AG04450 (cell line): ENCODE measurements at regions of chr1 and their contacts with region 1.

Region 1: DNA sequence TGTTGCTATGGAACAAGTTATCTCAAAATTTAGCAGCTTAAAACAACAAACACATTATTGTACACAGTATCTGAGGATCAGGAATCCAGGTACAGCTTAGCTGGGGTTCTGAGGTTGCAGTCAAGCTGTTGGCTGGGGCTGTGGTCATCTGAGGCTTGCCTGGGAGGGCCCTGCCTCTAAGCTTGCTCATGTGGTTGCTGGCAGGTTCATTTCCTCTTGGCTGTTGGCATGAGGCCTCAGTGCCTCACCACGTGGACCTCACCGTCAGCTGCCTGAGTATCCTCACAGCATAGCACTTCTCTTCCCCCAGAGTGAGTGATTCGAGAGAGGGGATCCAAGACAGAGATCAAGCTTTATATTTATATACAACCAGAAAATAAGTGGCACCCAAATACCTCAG is 18.6 kb downstream of the NTPCR start:
- DNase-seq: no peak
- H3K4me3 ChIP-seq: no peak overlapping the region
- H3K27ac ChIP-seq: no peak overlapping the region
- H3K27me3 ChIP-seq: no peaks in the 10 kb centered on the region
- CTCF ChIP-seq: no peak

Region 2: GRCh38 chr1:232863544-232864275 is 105.3 kb before region 1 on chr1:
- CTCF ChIA-PET with region 1: no interaction called
- POLR2A ChIA-PET with region 1: interaction called, 13 read pairs
- DNase-seq: no peak
- H3K4me3 ChIP-seq: no peak overlapping the region
- H3K27ac ChIP-seq: no peak overlapping the region
- H3K27me3 ChIP-seq: peaks cover 2% of the 10 kb centered on the region
- CTCF ChIP-seq: no peak

Region 3: DNA sequence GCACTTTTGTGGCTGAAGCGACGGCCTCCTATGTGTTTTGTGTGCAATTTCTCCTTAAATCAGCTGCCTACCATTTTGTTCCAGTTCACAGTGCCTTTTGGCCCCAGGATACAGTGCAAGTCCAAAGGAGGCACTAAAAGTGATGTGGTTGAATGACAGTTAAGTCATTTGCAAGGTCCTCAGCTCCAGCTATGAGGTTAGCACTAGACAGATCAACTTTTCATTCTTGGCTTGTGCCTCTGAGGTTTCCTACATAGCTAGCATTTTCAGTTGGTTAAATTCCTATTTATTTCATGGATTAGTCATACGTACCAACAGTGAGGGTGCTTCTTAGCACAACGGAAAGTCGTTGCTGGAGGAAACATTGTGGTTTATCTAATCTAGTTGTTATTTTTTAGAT is 77.9 kb before region 1 on chr1:
- CTCF ChIA-PET with region 1: no interaction called
- POLR2A ChIA-PET with region 1: interaction called, 12 read pairs
- DNase-seq: peak; percentile 62
- H3K4me3 ChIP-seq: no peak overlapping the region
- H3K27ac ChIP-seq: peak overlapping the region; percentile 34
- H3K27me3 ChIP-seq: peaks cover 2% of the 10 kb centered on the region
- CTCF ChIP-seq: no peak